H1 (cell line): ENCODE measurements at regions of chr16 and their contacts with region 1.

Region 1: GRCh38 chr16:75606507-75606906 is 16.6 kb downstream of the ADAT1 start:
- DNase-seq: no peak
- H3K4me3 ChIP-seq: no peak overlapping the region
- H3K27ac ChIP-seq: no peak overlapping the region
- H3K4me1 ChIP-seq: no peaks in the 10 kb centered on the region
- H3K27me3 ChIP-seq: no peaks in the 10 kb centered on the region
- CTCF ChIP-seq: no peak
- EP300 ChIP-seq: no peak
- POLR2A ChIP-seq: no peak
- RAD21 ChIP-seq: no peak

Region 2: DNA sequence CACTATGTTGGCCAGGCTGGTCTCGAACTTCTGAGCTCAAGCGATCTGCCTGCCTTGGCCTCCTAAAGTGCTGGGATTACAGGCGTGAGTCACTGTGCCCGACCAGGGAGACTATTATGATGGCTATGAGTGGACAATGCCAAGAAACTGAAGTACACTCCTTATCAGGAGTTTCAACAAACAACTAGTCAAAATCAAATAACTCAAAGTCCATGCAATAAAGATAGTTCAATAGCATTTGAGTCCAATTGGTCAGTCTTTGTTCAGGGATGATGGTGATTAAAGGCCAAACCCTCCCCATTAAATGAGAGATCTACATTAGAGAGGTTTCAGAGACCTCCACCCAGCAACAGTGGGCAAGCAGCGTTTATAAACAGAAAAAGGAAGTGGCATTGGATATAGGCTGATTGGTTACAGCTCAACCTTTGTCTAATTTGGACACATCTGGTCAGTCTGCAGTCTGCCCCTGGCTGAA is 78.6 kb before region 1 on chr16:
- CTCF ChIA-PET with region 1: no interaction called
- POLR2A ChIA-PET with region 1: no interaction called
- DNase-seq: no peak
- H3K4me3 ChIP-seq: no peak overlapping the region
- H3K27ac ChIP-seq: no peak overlapping the region
- H3K4me1 ChIP-seq: no peaks in the 10 kb centered on the region
- H3K27me3 ChIP-seq: no peaks in the 10 kb centered on the region
- CTCF ChIP-seq: no peak
- EP300 ChIP-seq: no peak
- POLR2A ChIP-seq: no peak
- RAD21 ChIP-seq: no peak

Region 3: GRCh38 chr16:75622761-75623605 is 16.5 kb after region 1 on chr16 and contains the start of gene ADAT1:
- CTCF ChIA-PET with region 1: interaction called, 22 read pairs
- POLR2A ChIA-PET with region 1: interaction called, 9 read pairs
- DNase-seq: peak; percentile 91 to 96
- H3K4me3 ChIP-seq: peak within 1 kb of the TSS; percentile 80 to 96 (median 85)
- H3K27ac ChIP-seq: peak within 1 kb of the TSS; percentile 90
- H3K4me1 ChIP-seq: peaks cover 0 to 9% (median 4%) of the 10 kb centered on the region in 4 experiments; a peak in 5 of 7 replicates
- H3K27me3 ChIP-seq: no peaks in the 10 kb centered on the region
- CTCF ChIP-seq: no peak
- EP300 ChIP-seq: peak in 1 of 2 experiments; percentile 12; a peak in 1 of 3 replicates
- POLR2A ChIP-seq: peak; percentile 77 to 94
- RAD21 ChIP-seq: no peak
- total RNA-seq, gene ADAT1: 44.7 and 47.4 TPM in 2 replicates

Region 4: DNA sequence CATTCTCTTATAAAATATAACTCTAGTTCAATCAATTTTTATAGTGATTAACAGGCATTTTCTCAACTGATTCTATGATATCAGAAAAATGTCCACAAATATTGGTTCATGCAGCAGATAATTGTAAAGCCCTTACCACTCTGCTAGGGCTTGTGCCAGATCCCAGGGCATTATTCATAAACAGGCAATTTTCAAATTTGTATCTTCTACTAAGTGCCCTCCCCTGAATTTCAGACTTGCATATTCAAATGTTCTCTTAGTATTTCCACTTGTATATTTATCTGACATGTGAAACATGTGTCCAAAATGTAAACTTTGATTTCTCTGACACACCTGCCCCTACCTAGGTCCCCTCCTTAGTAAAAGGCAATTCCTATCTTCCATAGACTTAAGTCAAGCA is 61.0 kb after region 1 on chr16:
- CTCF ChIA-PET with region 1: no interaction called
- POLR2A ChIA-PET with region 1: no interaction called
- DNase-seq: no peak
- H3K4me3 ChIP-seq: no peak overlapping the region
- H3K27ac ChIP-seq: no peak overlapping the region
- H3K4me1 ChIP-seq: no peaks in the 10 kb centered on the region
- H3K27me3 ChIP-seq: no peaks in the 10 kb centered on the region
- CTCF ChIP-seq: no peak
- EP300 ChIP-seq: no peak
- POLR2A ChIP-seq: no peak
- RAD21 ChIP-seq: no peak